Thyroid gland (tissue), 4 donors: ENCODE measurements at regions of chr19 and their contacts with region 1.

Region 1: GRCh38 chr19:15555759-15556633 is 47.7 kb downstream of the CYP4F22 start:
- DNase-seq: peak; percentile 84 to 88
- H3K4me3 ChIP-seq: no peak overlapping the region
- H3K27ac ChIP-seq: no peak overlapping the region
- H3K4me1 ChIP-seq: peaks cover 10 to 13% of the 10 kb centered on the region in 2 donors
- H3K27me3 ChIP-seq: peaks cover 2% of the 10 kb centered on the region
- CTCF ChIP-seq: peak; percentile 41 to 92 (median 74)
- POLR2A ChIP-seq: no peak

Region 2: GRCh38 chr19:15091901-15092753 is 463.9 kb before region 1 on chr19:
- intact Hi-C with region 1: loop called (anchors 5 kb)
- DNase-seq: peak; percentile 19 to 24
- H3K4me3 ChIP-seq: no peak overlapping the region
- H3K27ac ChIP-seq: no peak overlapping the region
- H3K4me1 ChIP-seq: no peaks in the 10 kb centered on the region
- H3K27me3 ChIP-seq: no peaks in the 10 kb centered on the region
- CTCF ChIP-seq: peak; percentile 34 to 82 (median 62)
- POLR2A ChIP-seq: no peak

Region 3: GRCh38 chr19:15177269-15178116 is 378.5 kb before region 1 on chr19:
- intact Hi-C with region 1: loop called (anchors 2 kb)
- DNase-seq: peak; percentile 80 to 81
- H3K4me3 ChIP-seq: peak overlapping the region in 1 of 3 donors; percentile 6
- H3K27ac ChIP-seq: no peak overlapping the region
- H3K4me1 ChIP-seq: peaks cover 3 to 6% of the 10 kb centered on the region in 2 donors
- H3K27me3 ChIP-seq: no peaks in the 10 kb centered on the region
- CTCF ChIP-seq: peak; percentile 68 to 99 (median 99)
- POLR2A ChIP-seq: no peak

Region 4: DNA sequence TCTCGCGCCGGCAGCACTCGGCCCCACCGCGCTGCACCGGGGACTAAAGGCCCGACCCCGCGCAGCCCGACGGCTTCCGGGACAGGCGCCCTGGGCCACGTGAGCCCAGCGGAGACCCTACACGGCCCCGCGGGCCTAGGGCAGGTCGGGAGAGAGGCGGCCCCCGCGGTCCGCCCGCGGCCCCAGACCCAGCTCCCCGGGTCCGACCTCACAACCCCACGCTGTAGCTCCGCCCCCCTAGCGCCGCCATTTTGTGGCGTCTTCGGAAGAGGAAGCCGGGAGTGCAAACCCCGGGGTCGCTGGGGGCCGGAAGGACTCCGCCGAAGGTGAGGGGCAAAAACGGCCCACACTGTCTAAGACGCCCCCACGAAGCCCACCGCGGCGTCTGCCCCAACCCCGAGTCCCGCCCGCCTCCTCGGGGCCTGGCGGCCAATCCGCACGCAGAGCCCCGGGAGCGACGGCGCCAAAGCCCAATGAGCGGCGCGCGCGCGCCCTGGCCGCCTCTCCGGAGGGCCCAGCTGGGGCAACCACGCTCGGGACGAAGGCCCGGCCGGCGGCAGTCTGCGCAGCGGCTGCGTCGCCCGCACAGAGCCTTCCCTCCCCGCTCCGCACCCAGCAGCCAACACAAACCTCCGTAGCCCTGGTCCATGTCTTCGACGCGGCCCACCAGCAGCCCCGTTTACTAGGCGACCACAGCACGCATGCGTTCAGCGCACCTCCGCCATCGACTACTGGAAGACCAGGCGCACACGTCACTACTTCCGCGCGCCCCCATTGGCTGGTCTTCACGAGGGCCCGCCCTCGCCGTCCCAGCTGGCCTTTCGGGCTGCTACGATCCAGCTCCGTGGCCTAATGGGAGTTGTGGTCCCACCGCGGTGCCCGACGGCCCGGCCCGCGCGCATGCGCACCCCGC is 176.7 kb before region 1 on chr19 and contains the start of gene AKAP8:
- intact Hi-C with region 1: loop called (anchors 10 kb)
- DNase-seq: peak; percentile 99
- H3K4me3 ChIP-seq: peak within 1 kb of the TSS; percentile 54 to 88 (median 70)
- H3K27ac ChIP-seq: peak within 1 kb of the TSS; percentile 89 to 98 (median 97)
- H3K4me1 ChIP-seq: peaks cover 21 to 46% of the 10 kb centered on the region in 2 donors
- H3K27me3 ChIP-seq: no peaks in the 10 kb centered on the region
- CTCF ChIP-seq: no peak
- POLR2A ChIP-seq: peak; percentile 38 to 82
- total RNA-seq, gene AKAP8: 21.8 to 33.2 (median 26.6) TPM

Region 5: DNA sequence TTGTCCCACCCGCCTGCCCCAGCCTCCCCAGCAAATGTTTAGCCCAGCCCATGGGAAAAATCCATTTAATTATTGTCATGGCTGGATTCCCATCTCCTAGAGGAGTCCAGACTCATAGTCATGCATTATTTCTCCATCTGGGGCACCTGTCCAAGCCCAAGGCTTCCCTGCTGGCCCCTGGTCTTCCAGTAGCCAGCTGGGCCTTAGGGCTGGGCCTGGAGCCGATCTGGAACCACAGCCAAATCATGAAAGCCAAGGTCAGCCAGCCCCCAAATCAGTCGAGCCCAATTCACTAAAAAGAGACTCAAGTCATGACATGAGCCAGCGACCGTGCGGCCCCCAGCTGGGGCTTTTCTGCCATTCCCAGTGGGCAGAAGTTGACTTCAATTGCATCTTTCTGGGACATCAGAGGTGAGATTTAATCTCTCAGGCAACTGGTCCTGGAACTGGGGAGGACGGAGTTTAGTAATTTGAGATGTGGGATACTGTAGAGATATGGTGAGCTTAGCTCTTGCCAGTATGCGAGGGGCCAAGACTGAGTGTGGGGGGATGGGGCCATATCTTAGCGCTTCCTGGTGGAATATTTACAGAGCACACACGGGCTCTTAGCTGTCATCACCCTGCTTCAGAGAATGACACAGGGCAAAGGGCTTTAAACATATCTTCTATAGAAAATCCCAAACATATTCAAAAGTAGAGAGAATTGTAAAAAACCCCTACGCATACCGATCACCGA is 67.3 kb before region 1 on chr19:
- intact Hi-C with region 1: no loop called
- DNase-seq: no peak
- H3K4me3 ChIP-seq: no peak overlapping the region
- H3K27ac ChIP-seq: no peak overlapping the region
- H3K4me1 ChIP-seq: no peaks in the 10 kb centered on the region
- H3K27me3 ChIP-seq: no peaks in the 10 kb centered on the region
- CTCF ChIP-seq: no peak
- POLR2A ChIP-seq: no peak